PC-3 (cell line): ENCODE measurements at regions of chr12 and their contacts with region 1.

Region 1: GRCh38 chr12:27894309-27894708 is 78.2 kb downstream of the PTHLH start:
- DNase-seq: no peak
- ATAC-seq: no peak
- H3K4me3 ChIP-seq: no peak overlapping the region
- H3K27ac ChIP-seq: no peak overlapping the region
- H3K4me1 ChIP-seq: peaks cover 9% of the 10 kb centered on the region
- H3K27me3 ChIP-seq: no peaks in the 10 kb centered on the region
- CTCF ChIP-seq: no peak

Region 2: GRCh38 chr12:27449026-27449425 is 445.3 kb before region 1 on chr12:
- CTCF ChIA-PET with region 1: no interaction called
- POLR2A ChIA-PET with region 1: no interaction called
- intact Hi-C with region 1: no loop called
- DNase-seq: no peak
- ATAC-seq: no peak
- H3K4me3 ChIP-seq: no peak overlapping the region
- H3K27ac ChIP-seq: no peak overlapping the region
- H3K4me1 ChIP-seq: no peaks in the 10 kb centered on the region
- H3K27me3 ChIP-seq: no peaks in the 10 kb centered on the region
- CTCF ChIP-seq: no peak

Region 3: DNA sequence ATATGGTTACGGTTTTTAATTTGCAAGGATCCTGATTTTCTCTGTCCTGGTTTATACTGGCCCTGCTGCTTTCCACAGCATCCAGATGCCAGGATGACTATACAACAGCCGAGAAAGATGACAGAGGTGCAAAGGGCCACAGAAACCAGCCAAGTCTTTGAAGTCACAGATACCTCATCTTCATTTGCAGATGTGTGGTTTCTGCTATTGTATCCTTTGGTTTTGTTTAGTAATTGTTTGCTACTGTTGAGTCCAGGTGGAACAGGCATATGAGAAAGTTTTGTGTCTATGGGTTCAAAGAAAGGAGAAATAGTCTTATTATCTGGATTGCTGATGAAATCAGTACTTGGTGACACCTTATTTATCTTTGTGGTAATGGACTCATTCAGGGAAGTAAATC is 131.6 kb before region 1 on chr12:
- CTCF ChIA-PET with region 1: interaction called, 14 read pairs
- POLR2A ChIA-PET with region 1: no interaction called
- intact Hi-C with region 1: no loop called
- DNase-seq: no peak
- ATAC-seq: no peak
- H3K4me3 ChIP-seq: no peak overlapping the region
- H3K27ac ChIP-seq: no peak overlapping the region
- H3K4me1 ChIP-seq: no peaks in the 10 kb centered on the region
- H3K27me3 ChIP-seq: no peaks in the 10 kb centered on the region
- CTCF ChIP-seq: no peak